Activated CD4-positive, alpha-beta T cell treated with anti-CD3 and anti-CD28 coated beads for 36 hours (primary cell): ENCODE measurements at regions of chr3 and their contacts with region 1.

Region 1: DNA sequence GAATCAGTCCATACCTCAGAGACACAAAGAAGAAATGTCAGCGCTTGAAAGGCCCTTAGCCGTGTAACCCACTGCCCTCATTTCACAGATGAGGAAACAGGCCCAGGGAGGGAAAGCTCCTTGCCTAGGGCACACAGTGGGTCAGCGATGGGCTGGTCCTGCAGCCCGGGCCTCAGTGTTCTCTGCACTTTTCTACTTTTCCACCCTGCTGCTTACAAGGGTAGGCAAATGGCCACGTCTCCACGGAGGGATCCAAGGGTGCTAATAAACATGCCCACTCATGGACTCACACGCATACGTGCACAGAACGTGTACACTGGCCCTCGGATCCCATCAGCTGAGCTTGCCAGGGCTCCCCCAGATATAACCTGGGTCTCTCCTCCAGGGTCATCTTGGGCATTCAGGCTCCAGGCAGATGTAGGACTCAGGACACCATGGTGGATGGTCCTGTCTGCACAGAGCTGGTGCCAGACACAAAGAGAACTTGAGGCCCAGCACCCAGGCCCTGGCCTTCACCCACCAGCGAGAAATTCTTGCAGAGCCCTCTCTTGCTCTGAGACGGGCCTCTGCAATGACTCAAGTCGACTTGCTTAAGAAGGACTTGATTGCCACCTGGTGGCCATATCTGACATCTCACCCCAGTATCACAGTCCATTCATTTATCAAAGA is 34.5 kb upstream of the VPS8 start:
- DNase-seq: peak; percentile 91
- ATAC-seq: peak; percentile 99
- H3K4me3 Mint-ChIP-seq: no peak overlapping the region
- H3K27ac Mint-ChIP-seq: no peak overlapping the region
- H3K4me1 Mint-ChIP-seq: no peaks in the 10 kb centered on the region
- H3K27me3 Mint-ChIP-seq: peaks cover 10% of the 10 kb centered on the region

Region 2: DNA sequence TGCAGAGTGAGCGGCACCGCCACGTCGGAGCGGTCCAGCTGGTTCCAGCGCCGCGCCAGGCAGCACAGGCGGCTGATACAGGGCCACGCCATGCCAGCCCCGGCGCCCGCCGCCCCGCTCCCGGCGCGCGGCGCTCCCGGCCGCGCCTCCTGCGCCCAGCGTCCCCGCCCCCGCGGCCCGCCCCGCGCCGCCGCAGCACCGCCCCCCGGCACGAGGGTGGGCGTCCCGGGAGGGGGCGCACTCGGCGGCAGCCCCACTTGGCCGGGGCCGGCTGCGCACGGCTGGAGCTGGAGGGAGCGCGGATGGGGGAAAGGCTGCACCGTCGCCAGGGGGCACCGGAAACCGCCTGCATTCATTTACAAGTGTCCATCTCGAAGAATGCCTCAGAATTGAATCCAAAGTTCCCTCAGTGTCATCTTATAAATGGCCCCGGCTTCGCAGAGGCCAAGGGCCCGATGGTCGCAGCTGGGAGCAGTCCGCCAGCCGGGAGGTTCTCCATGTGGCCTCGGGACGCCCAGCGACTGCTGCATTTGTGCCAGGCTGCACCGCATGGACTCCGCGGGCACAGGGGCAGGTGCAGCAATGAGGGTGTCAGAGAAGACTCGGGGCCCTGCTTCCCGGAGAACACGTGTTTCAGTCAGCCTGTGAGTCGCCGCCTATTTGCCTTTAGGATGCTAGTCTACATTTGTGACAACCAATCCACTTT is 951.9 kb before region 1 on chr3 and contains the start of gene MAP6D1:
- CTCF ChIA-PET with region 1: no interaction called
- POLR2A ChIA-PET with region 1: no interaction called
- intact Hi-C with region 1: no loop called
- DNase-seq: peak; percentile 68
- ATAC-seq: peak; percentile 59
- H3K4me3 Mint-ChIP-seq: peak within 1 kb of the TSS; percentile 74
- H3K27ac Mint-ChIP-seq: peak within 1 kb of the TSS; percentile 55
- H3K4me1 Mint-ChIP-seq: peaks cover 11% of the 10 kb centered on the region
- H3K27me3 Mint-ChIP-seq: peaks cover 2% of the 10 kb centered on the region
- total RNA-seq, gene MAP6D1: 1.3 to 1.6 TPM

Region 3: DNA sequence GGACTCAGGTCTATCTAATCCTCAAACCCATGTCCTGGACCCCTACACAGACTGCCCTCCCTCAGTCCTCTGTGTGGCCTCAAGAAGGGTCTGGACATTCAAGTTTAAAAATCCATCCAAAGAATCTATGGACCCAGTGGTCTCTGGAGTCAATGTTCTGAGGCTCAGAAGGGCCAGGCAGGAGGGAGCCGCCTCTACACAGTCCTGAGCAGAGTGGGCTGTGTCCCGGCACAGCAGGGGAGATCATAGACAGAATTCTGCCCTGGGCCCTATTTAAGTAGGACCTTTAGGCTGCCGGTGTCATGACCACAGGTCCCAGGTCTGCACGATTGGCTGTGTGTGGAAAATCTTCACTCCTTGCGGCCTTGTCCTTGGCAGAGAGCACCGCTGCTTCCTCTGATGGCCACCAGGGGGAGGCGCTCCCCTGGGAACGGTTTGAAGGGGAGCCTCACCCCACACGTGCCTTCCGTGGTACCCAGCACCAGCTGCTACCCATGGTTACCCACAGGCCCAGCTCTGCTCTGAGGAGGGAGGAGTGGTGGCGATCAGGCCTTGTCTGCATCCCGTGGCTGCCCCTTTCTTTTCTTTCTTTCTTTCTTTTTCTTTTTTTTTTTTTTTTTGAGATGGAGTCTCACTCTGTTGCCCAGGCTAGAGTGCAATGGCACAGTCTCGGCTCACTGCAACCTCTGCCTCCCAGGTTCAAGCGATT is 359.7 kb before region 1 on chr3:
- CTCF ChIA-PET with region 1: no interaction called
- POLR2A ChIA-PET with region 1: no interaction called
- intact Hi-C with region 1: loop called in 1 of 2 experiments (anchors 2 kb)
- DNase-seq: peak; percentile 86
- ATAC-seq: peak; percentile 97
- H3K4me3 Mint-ChIP-seq: no peak overlapping the region
- H3K27ac Mint-ChIP-seq: no peak overlapping the region
- H3K4me1 Mint-ChIP-seq: peaks cover 2% of the 10 kb centered on the region
- H3K27me3 Mint-ChIP-seq: no peaks in the 10 kb centered on the region

Region 4: DNA sequence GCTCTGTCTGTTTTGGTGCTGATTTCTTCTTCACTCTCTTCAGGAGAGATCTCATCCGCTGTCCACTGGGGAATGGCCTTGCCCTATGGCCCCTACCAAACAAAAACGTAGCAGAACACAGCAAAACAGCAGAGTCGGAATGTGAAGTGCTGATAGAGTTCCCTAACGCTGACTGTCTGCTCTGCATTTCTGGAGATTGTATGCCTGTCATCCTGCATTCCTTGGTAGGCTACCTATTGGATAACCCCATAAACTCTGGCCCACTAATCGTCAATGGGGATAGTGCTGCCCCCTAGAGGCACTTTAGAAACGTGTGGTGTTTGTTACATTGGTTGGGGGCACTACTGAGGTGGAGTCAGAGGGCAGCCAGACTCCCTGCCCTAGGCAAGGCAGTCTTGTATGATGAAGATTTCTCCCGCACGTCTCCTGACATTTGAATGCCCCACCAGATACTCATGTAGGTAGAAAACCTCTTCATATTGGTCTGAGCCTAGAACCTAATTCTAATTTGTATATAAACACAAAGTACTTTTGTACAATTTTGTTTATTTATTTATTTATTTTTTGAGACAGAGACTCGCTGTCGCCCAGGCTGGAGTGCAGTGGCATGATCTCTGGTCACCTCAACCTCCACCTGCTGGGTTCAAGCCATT is 50.0 kb before region 1 on chr3:
- CTCF ChIA-PET with region 1: interaction called, 3 read pairs
- POLR2A ChIA-PET with region 1: no interaction called
- intact Hi-C with region 1: loop called in 1 of 2 experiments (anchors 1 kb)
- DNase-seq: peak; percentile 67
- ATAC-seq: peak; percentile 88
- H3K4me3 Mint-ChIP-seq: no peak overlapping the region
- H3K27ac Mint-ChIP-seq: no peak overlapping the region
- H3K4me1 Mint-ChIP-seq: no peaks in the 10 kb centered on the region
- H3K27me3 Mint-ChIP-seq: peaks cover 4% of the 10 kb centered on the region

Region 5: DNA sequence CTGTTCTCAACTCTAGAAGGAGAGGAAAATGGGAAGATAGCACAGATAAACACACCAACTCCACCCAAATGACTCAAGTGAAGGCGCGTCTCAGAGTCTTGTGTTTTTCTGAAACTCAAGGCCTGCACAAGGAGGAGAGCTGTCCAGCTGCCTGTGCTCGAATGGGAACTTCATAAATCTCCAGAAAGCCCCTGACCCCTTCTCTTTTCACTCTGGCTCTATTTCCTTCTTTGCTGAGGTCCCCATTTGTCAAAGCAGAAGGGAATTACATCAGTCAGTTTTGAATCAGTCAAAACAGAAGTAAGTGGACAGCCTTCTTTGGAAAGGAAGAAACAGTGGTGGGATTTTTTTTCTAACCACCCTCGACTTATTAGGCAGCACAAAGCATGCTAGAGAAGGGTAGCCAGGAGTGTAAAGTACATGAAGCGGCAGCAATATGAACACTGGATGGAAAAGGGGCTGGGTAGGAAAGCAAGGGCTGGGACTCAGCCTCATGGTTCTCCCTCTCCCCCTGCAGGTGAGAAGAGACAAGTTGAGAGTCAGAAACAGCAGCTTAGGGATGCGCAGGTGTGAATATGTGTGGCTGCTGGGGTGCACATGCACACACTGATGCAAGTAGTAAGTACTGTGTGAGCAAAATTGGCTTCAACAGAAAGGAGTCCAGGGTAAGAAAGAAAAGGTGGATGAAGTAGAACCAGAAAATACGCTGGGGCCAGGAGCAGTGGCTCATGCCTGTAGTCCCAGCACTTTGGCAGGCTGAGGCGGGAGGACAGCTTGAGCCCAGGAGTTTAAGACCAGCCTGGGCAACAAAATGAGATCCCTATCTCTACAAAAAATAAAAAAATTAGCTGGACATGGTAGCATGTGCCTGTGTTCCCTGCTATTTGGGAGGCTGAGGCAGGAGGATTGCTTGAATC is 29.0 kb before region 1 on chr3:
- CTCF ChIA-PET with region 1: interaction called, 12 read pairs
- POLR2A ChIA-PET with region 1: no interaction called
- intact Hi-C with region 1: no loop called
- DNase-seq: peak; percentile 47
- ATAC-seq: peak; percentile 93
- H3K4me3 Mint-ChIP-seq: no peak overlapping the region
- H3K27ac Mint-ChIP-seq: peak overlapping the region; percentile 39
- H3K4me1 Mint-ChIP-seq: peaks cover 12% of the 10 kb centered on the region
- H3K27me3 Mint-ChIP-seq: peaks cover 2% of the 10 kb centered on the region

Region 6: GRCh38 chr3:185552358-185552877 is 774.9 kb after region 1 on chr3 and contains the start of gene LIPH:
- CTCF ChIA-PET with region 1: no interaction called
- POLR2A ChIA-PET with region 1: no interaction called
- intact Hi-C with region 1: no loop called
- DNase-seq: peak; percentile 44
- ATAC-seq: peak; percentile 94
- H3K4me3 Mint-ChIP-seq: no peak within 1 kb of the TSS
- H3K27ac Mint-ChIP-seq: no peak within 1 kb of the TSS
- H3K4me1 Mint-ChIP-seq: peaks cover 13% of the 10 kb centered on the region
- H3K27me3 Mint-ChIP-seq: no peaks in the 10 kb centered on the region
- total RNA-seq, gene LIPH: not detected